ENCODE measurements at regions of chr11 and their contacts with region 1.

Region 1: GRCh38 chr11:12043959-12044819 is 35.8 kb upstream of the DKK3 start:
- DNase-seq: peak; percentile 79 to 82 (median 80)
- ATAC-seq: peak; percentile 84
- H3K4me3 ChIP-seq: no peak overlapping the region
- H3K27ac ChIP-seq: peak overlapping the region; percentile 6 to 52 (median 34)
- H3K4me1 ChIP-seq: peaks cover 14% of the 10 kb centered on the region
- H3K27me3 ChIP-seq: no peaks in the 10 kb centered on the region
- CTCF ChIP-seq: peak; percentile 82 to 97 (median 93)
- POLR2A ChIP-seq: peak in 1 of 3 donors; percentile 7

Region 2: DNA sequence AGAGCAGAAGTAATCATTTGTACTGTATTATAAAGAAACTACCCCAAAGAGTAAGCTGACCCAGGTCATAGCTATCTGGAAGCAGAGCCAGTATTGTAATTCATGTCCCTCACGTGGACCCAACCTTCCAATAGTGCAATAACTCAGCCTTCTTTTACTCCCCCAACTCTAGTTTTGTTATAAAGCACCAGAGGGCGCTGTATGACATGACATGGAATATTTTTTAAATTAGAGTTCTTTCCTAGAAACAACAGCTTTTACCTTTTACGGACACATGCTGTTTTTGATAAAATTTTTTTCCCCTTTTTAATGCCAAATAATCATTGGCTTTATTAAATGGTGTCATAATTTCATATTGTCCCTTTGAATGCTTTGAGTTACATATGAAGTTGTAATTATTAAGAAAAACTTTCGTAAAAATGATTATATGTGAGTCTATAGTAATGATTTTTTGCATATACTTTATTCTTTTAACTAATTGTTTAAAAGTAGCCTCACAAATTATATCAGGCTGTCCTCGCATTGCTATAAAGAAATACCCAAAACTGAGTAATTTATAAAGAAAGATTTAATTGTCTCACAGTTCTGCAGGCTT is 112.6 kb before region 1 on chr11:
- intact Hi-C with region 1: loop called (anchors 10 kb)
- DNase-seq: peak in 1 of 4 donors; percentile 38
- ATAC-seq: peak; percentile 50
- H3K4me3 ChIP-seq: no peak overlapping the region
- H3K27ac ChIP-seq: no peak overlapping the region
- H3K4me1 ChIP-seq: no peaks in the 10 kb centered on the region
- H3K27me3 ChIP-seq: no peaks in the 10 kb centered on the region
- CTCF ChIP-seq: peak; percentile 26 to 61 (median 52)
- POLR2A ChIP-seq: no peak

Region 3: GRCh38 chr11:12281571-12282478 is 237.6 kb after region 1 on chr11:
- intact Hi-C with region 1: loop called (anchors 5 kb)
- DNase-seq: peak; percentile 89 to 92 (median 90)
- ATAC-seq: peak; percentile 77
- H3K4me3 ChIP-seq: no peak overlapping the region
- H3K27ac ChIP-seq: no peak overlapping the region
- H3K4me1 ChIP-seq: peaks cover 11% of the 10 kb centered on the region
- H3K27me3 ChIP-seq: no peaks in the 10 kb centered on the region
- CTCF ChIP-seq: peak; percentile 88 to 99 (median 98)
- POLR2A ChIP-seq: no peak